ENCODE measurements at regions of chr17 and their contacts with region 1.

Region 1: DNA sequence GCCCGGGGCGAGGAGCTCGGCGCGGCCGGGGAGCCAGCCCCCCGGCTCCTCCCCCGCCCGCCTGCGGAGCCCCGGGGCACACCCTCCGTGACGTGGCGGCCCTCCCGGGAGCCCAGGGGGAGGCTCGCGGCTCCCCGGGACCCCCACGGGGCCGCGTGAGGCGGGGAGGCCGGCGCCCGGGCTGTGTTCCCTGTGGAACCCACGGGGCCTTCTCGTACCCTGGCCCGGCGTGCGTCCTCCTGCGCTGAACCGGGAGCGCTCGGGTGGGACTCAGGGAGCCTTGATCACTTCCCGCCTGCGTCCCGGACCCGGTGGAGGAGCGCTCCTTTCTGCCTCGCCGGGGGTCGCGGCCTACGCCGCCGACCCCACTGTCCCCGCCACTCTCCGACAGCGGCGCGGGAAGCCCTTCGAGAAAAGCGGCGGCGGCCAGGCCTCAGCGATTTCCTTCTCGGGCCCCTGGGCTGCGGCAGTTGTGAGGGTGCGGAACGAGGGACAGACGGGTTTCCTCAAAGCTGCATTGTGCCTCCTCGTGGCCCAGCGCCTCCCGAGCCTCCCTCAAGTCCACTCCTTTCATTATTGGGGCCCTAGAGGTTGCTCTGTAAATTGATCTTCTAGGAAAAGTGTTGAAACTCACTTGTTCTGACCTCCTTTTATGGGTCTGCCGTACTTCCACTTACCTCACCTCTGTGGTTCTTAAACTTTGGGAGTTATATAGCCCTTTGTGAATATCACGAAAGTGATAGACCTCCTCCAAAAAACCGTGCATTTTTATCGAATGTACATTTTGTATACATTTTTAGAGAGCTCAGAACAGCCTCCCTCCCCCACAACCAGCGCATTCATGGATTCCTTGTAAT is 597 bp downstream of the LIG3 start:
- DNase-seq: peak; percentile 74
- H3K4me3 Mint-ChIP-seq: peak overlapping the region; percentile 94
- H3K27ac Mint-ChIP-seq: peak overlapping the region; percentile 96
- H3K4me1 Mint-ChIP-seq: peaks cover 39% of the 10 kb centered on the region
- H3K27me3 Mint-ChIP-seq: no peaks in the 10 kb centered on the region

Region 2: DNA sequence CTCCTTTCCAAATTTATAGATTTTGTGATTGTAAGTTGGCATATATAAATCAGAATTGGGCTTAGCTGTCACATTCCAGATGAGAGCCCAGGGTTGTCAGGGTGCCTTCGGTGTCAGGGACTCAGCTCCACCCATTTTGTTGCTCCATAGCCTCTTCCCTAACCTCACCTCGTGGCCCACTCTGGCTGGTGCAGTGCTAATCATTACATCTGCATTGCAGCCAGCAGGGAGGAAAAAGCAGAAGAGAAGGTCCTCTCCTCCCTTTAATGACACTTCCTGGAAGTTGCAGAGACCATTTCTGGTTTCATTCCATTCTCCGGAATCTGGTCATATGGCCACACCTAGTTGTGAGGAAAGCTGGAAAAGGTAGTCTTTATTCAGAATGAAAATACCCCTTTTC is 133.0 kb before region 1 on chr17:
- intact Hi-C with region 1: no loop called
- DNase-seq: no peak
- H3K4me3 Mint-ChIP-seq: no peak overlapping the region
- H3K27ac Mint-ChIP-seq: no peak overlapping the region
- H3K4me1 Mint-ChIP-seq: no peaks in the 10 kb centered on the region
- H3K27me3 Mint-ChIP-seq: peaks cover 2% of the 10 kb centered on the region

Region 3: GRCh38 chr17:34858591-34859565 is 122.0 kb before region 1 on chr17:
- intact Hi-C with region 1: loop called (anchors 1 kb)
- DNase-seq: no peak
- H3K4me3 Mint-ChIP-seq: peak overlapping the region; percentile 19
- H3K27ac Mint-ChIP-seq: peak overlapping the region; percentile 78
- H3K4me1 Mint-ChIP-seq: peaks cover 20% of the 10 kb centered on the region
- H3K27me3 Mint-ChIP-seq: peaks cover 26% of the 10 kb centered on the region

Region 4: DNA sequence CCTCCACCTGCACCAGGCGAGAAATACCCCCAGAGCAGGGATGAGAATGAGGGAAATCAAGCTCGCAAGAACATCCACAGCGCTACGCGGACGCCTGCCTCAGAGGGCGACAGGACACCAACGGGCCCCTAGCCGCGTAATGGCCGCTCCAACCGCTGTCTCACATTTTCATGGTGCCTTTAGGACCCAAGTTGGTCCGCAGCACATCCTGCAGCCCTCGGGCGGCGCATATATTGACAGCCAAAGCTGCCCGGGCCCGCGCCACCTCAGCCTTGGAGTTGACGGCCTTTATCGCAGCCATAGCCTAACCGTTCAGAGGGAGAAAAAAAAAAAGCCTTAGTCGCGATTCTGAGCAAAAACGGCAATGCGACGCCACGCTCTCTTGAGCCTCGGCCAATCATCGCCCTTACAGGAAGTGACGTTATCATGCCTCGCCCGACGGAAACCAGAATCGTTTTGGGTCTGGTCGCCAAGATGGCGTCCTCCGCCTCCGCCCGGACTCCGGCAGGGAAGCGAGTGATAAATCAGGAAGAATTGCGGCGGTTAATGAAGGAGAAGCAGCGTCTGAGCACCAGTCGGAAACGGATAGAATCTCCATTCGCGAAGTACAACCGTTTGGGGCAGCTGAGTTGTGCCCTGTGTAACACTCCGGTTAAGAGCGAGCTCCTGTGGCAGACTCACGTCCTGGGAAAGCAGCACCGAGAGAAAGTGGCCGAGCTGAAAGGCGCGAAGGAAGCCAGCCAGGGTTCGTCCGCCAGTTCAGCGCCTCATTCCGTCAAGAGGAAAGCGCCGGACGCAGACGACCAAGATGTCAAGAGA is 19.6 kb before region 1 on chr17 and contains the starts of genes CCT6B and ZNF830:
- intact Hi-C with region 1: loop called (anchors 1 kb)
- DNase-seq: peak; percentile 89
- H3K4me3 Mint-ChIP-seq: peak within 1 kb of the TSS; percentile 100
- H3K27ac Mint-ChIP-seq: peak within 1 kb of the TSS; percentile 100
- H3K4me1 Mint-ChIP-seq: peaks cover 18% of the 10 kb centered on the region
- H3K27me3 Mint-ChIP-seq: peaks cover 3% of the 10 kb centered on the region
- total RNA-seq, gene CCT6B: 1.4 and 1.5 TPM in 2 replicates
- total RNA-seq, gene ZNF830: 23.8 and 24.9 TPM in 2 replicates